Vagina (tissue), 2 donors: ENCODE measurements at regions of chr1 and their contacts with region 1.

Region 1: DNA sequence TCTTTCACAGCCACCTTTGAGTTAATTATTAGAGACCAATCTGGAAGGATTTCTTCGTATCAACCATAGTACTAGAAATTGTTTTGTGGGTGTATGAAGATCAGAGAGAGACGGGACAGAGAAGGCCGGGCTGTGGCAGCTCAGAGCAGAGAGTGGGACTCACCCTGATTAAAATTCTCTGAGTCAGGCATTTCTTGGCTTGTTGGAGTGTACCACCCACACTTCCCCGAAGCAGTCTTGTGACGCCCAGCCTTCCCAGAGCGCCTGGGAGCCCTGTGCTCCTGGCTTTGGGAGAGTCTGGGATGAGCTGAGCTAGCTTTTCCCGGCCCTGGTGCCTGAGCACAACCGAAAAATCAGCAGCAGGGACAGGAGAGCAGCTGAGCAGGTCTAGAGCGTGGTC is 19.4 kb downstream of the PLEKHM2 start:
- DNase-seq: no peak
- H3K4me3 ChIP-seq: peak overlapping the region in 1 of 2 donors; percentile 21
- H3K27ac ChIP-seq: peak overlapping the region; percentile 95
- H3K4me1 ChIP-seq: peaks cover 74% of the 10 kb centered on the region
- H3K27me3 ChIP-seq: no peaks in the 10 kb centered on the region
- CTCF ChIP-seq: no peak
- POLR2A ChIP-seq: peak; percentile 8 to 59

Region 2: GRCh38 chr1:15617175-15617880 is 86.2 kb before region 1 on chr1 and contains the start of gene DDI2:
- intact Hi-C with region 1: loop called (anchors 10 kb)
- DNase-seq: peak; percentile 98
- H3K4me3 ChIP-seq: peak within 1 kb of the TSS; percentile 89 to 99
- H3K27ac ChIP-seq: peak within 1 kb of the TSS; percentile 100
- H3K4me1 ChIP-seq: peaks cover 45% of the 10 kb centered on the region
- H3K27me3 ChIP-seq: no peaks in the 10 kb centered on the region
- CTCF ChIP-seq: no peak
- POLR2A ChIP-seq: peak; percentile 53 to 90
- total RNA-seq, gene DDI2: 59.2 TPM

Region 3: DNA sequence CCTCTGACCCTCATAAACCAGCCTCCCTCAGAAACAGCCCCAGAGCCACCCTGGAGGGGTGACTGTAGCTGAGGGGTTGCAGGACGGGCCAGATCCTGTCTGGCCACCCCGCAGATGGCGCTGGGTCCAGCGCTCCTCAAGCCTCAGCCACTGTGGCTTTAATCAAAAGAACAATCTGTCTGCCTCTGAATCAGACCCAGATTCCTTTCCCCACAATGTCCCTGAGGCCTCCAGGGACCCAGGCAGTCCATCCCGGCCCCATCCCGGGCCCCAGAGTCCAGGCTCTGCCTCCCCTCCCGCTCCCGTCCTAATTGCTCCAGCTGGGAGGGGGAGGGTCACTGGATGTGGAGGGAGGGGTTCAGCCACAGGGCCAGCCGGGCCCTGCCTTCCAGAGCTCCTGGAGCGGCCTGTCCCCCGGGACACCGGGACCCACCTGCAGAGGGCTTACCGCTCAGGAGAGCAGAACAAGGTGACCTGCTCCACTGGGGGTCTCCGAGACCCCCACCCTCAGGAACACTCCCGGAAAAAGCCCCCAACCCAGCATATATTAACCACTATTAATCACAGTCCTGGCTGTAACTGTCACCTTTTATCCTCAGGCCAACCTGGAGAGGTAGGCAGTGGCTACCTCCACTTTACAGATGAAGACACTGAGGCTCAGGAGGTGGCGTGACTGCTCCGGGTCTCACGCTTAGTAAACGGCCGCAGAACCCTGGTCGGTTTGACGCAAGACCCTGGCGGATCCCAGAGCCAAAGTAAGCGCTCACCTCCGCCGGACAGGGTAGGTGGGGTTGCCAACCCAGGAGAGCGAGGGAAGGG is 54.2 kb after region 1 on chr1:
- intact Hi-C with region 1: loop called (anchors 5 kb)
- DNase-seq: no peak
- H3K4me3 ChIP-seq: peak overlapping the region; percentile 77 to 80
- H3K27ac ChIP-seq: peak overlapping the region; percentile 87
- H3K4me1 ChIP-seq: peaks cover 55% of the 10 kb centered on the region
- H3K27me3 ChIP-seq: no peaks in the 10 kb centered on the region
- CTCF ChIP-seq: no peak
- POLR2A ChIP-seq: peak in 1 of 2 donors; percentile 10

Region 4: GRCh38 chr1:15803354-15803753 is 99.8 kb after region 1 on chr1:
- intact Hi-C with region 1: no loop called
- DNase-seq: no peak
- H3K4me3 ChIP-seq: no peak overlapping the region
- H3K27ac ChIP-seq: no peak overlapping the region
- H3K4me1 ChIP-seq: peaks cover 26% of the 10 kb centered on the region
- H3K27me3 ChIP-seq: no peaks in the 10 kb centered on the region
- CTCF ChIP-seq: peak in 1 of 3 experiments; percentile 22
- POLR2A ChIP-seq: no peak